ENCODE measurements at regions of chr1 and their contacts with region 1.

Region 1: GRCh38 chr1:204997591-204998355 is 45.2 kb upstream of the CNTN2 start:
- DNase-seq: peak in 2 of 5 donors; percentile 40 to 42
- ATAC-seq: peak in 3 of 4 donors; percentile 46 to 77 (median 62)
- H3K4me3 ChIP-seq: no peak overlapping the region
- H3K27ac ChIP-seq: peak overlapping the region in 7 of 12 donors; percentile 11 to 62 (median 33)
- H3K4me1 ChIP-seq: peaks cover 0 to 20% (median 9%) of the 10 kb centered on the region in 12 donors
- H3K27me3 ChIP-seq: no peaks in the 10 kb centered on the region
- CTCF ChIP-seq: no peak
- POLR2A ChIP-seq: no peak

Region 2: DNA sequence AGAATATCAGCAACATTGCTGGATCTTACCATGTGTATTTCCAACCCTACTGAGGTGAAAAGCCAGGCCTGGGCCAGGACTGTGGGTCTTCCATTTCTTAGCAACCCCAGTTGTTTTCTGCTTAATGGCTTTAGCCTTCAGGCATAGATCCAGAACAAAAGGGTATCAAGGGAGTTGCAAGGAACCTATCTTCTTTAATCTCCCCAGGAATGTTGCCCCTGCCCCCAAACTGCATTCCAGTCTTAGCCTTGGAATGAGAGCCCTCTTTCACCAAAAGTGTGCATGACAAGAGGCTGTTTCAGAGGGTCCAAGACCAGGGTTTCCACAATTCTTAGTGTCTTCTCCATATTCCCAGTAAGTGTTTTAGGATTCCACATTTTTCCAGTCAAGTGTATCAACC is 1012.7 kb before region 1 on chr1:
- intact Hi-C with region 1: no loop called
- DNase-seq: no peak
- ATAC-seq: no peak
- H3K4me3 ChIP-seq: no peak overlapping the region
- H3K27ac ChIP-seq: no peak overlapping the region
- H3K4me1 ChIP-seq: no peaks in the 10 kb centered on the region
- H3K27me3 ChIP-seq: no peaks in the 10 kb centered on the region
- CTCF ChIP-seq: no peak
- POLR2A ChIP-seq: no peak

Region 3: GRCh38 chr1:205020466-205020865 is 22.7 kb after region 1 on chr1:
- intact Hi-C with region 1: loop called in 1 of 10 experiments (anchors 1 kb)
- DNase-seq: no peak
- ATAC-seq: no peak
- H3K4me3 ChIP-seq: no peak overlapping the region
- H3K27ac ChIP-seq: no peak overlapping the region
- H3K4me1 ChIP-seq: no peaks in the 10 kb centered on the region
- H3K27me3 ChIP-seq: no peaks in the 10 kb centered on the region
- CTCF ChIP-seq: no peak
- POLR2A ChIP-seq: no peak

Region 4: DNA sequence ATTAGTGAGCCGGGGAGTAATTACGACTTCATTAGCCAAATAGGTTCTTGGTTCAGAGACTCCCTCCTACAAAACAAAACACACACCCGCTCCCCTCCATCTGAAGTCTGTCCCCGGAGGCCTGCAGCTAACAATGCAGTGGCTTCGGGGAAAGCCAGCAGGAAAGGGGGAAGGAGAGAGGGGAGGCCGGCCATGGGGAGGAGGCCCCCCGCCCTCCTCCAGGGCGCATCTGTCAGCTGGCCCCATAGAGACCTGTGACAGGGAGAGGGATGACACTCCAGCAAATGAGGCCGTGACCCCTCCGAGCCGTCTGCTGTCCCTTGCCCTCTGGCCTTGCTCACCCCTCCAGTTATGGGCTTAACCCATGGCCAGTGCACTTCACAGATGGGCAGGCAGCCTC is 33.1 kb after region 1 on chr1:
- intact Hi-C with region 1: loop called in 1 of 10 experiments (anchors 2 kb)
- DNase-seq: no peak
- ATAC-seq: no peak
- H3K4me3 ChIP-seq: no peak overlapping the region
- H3K27ac ChIP-seq: no peak overlapping the region
- H3K4me1 ChIP-seq: no peaks in the 10 kb centered on the region
- H3K27me3 ChIP-seq: peaks cover 0 to 6% (median 0%) of the 10 kb centered on the region in 9 donors
- CTCF ChIP-seq: no peak
- POLR2A ChIP-seq: no peak

Measured in heart left ventricle (tissue), 16 donors.